A549 (cell line): ENCODE measurements at regions of chr9 and their contacts with region 1.

Region 1: GRCh38 chr9:127916665-127917613 is at the start of gene ST6GALNAC4:
- DNase-seq: peak; percentile 74 to 89
- ATAC-seq: peak; percentile 42 to 74
- H3K4me3 ChIP-seq: peak within 1 kb of the TSS; percentile 65
- H3K27ac ChIP-seq: peak within 1 kb of the TSS; percentile 82 to 90
- H3K4me1 ChIP-seq: peaks cover 72% of the 10 kb centered on the region
- CTCF ChIP-seq: no peak
- EP300 ChIP-seq: no peak
- POLR2A ChIP-seq: peak; percentile 43; the same call in 1 of the 2 replicates
- RAD21 ChIP-seq: no peak
- polyA plus RNA-seq, gene ST6GALNAC4: 11.0 and 12.5 TPM in 2 replicates

Region 2: GRCh38 chr9:127489471-127490115 is 427.3 kb before region 1 on chr9:
- CTCF ChIA-PET with region 1: interaction called, 12 read pairs
- POLR2A ChIA-PET with region 1: no interaction called
- DNase-seq: no peak
- ATAC-seq: peak in 1 of 2 experiments; percentile 60; a peak in 3 of 6 replicates
- H3K4me3 ChIP-seq: no peak overlapping the region
- H3K27ac ChIP-seq: no peak overlapping the region
- H3K4me1 ChIP-seq: no peaks in the 10 kb centered on the region
- CTCF ChIP-seq: no peak
- EP300 ChIP-seq: no peak
- POLR2A ChIP-seq: no peak
- RAD21 ChIP-seq: no peak

Region 3: DNA sequence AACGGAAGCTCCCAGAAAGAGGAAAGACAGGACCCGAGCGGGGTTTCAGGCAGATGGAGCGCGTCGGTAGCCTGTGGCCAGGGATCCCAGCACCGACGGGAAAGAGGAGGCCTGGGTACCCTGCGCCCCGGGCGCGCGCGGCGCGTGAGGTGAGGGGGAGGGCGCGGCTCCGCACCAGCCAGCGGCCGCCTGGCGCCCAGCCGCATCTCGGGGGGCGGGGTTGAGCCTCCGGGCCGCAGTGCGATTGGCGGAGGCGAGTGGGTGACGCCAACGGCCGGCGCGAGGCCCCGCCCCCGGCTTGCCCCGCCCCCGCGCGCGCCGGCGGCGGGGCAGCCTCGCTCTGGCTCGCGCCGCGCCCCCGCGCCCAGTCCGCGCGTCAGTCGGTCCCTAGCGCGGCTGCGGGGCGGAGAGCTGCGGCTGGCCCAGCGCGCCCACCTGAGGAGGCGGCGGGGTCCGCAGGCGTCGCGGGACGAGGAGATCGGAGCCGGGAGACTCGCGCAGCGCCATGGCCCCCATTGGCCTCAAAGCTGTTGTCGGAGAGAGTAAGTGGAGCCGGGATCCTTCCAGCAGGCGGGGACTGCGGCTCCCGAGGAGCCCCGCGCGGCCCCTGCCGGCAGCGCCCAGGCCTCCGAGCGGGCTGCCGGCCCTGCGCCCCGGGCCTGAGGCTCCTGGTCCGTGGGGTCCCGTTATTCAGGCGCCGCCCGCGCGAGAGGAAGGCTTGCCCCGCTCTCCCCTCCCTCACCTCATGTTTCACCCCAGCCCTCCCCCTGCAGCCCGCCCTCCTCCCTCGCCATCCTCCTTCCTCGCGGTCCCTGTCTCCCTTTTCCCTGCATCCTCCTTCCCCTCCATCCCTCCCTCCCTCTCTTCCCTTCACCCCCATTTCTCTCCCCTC is 304.8 kb before region 1 on chr9 and contains the start of gene STXBP1:
- CTCF ChIA-PET with region 1: interaction called, 11 read pairs
- POLR2A ChIA-PET with region 1: no interaction called
- DNase-seq: peak; percentile 81 to 84
- ATAC-seq: peak; percentile 72 to 74
- H3K4me3 ChIP-seq: peak within 1 kb of the TSS; percentile 77
- H3K27ac ChIP-seq: peak within 1 kb of the TSS; percentile 73 to 96
- H3K4me1 ChIP-seq: peaks cover 23% of the 10 kb centered on the region
- CTCF ChIP-seq: 0 out of 3 replicates have a peak, but pooled peaks have one; percentile 10
- EP300 ChIP-seq: no peak
- POLR2A ChIP-seq: peak; percentile 59
- RAD21 ChIP-seq: no peak
- polyA plus RNA-seq, gene STXBP1: 13.3 and 20.4 TPM in 2 replicates

Region 4: DNA sequence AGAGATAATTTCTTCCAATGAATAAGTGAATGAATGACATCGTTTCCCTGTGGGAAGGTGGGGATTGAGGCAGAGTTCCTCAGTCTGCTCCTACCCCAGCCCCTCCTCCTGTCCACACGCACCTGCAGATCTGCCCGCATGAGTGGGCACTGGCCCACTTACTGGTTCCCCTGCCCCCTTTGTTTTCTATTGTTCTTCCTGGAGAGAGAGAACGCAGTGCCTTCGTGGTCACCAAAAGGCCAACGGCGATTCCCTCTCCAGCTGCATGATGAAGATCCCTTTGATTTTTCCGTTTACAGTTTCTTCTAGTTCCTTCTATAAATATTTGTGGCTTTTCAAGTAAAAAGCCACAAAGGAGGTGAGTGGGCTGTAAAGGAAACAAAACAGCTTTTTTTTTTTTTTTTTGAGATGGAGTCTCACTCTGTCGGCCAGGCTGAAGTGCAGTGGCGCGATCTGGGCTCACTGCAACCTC is 120.0 kb before region 1 on chr9:
- CTCF ChIA-PET with region 1: interaction called, 17 read pairs
- POLR2A ChIA-PET with region 1: no interaction called
- DNase-seq: no peak
- ATAC-seq: no peak; a peak in 1 of 6 replicates
- H3K4me3 ChIP-seq: no peak overlapping the region
- H3K27ac ChIP-seq: no peak overlapping the region
- H3K4me1 ChIP-seq: peaks cover 33% of the 10 kb centered on the region
- CTCF ChIP-seq: no peak
- EP300 ChIP-seq: no peak
- POLR2A ChIP-seq: no peak
- RAD21 ChIP-seq: no peak

Region 5: DNA sequence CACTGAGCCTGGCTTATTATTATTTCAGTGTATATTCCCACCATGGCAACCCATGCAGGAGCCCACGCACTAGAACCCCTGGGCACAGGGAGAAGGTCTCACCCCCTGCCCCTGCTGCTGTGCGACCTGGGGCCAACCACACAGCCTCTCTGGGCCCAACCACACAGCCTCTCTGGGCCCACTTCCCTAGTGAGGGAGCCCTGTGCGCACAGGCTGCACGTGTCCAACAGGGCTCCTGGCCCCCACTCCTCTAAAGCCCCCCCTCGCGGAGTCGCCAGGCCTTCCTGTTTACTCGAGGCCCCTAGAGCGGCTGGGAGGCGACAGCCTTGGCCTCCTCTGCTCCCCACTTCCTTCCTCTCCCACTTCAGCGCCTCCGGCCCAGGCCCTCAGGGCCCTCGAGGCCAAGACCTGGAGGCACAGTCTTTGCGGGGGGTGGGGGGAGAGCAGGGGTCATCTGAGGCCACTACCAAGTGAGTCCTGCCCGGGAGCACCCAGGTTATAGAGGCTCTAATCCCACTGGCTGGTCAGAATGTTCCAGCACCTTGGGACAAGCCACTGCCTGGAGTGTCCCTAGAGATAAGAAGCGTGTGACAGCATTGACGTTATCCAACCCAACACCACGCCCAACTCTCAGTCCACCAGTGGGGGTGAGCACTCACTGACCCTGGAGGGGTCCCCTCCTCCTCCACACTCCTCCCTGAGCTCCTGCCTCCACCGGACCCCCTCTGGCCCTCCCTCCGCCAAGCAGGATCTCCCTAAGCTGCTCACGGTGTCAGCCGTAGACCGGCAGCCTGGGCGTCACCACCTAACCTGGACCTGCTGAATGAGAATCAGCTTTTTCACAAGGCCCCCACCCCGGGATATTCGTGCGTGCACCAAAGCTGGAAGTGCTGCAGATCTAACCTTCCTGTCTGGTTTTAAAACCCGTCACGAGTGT is 54.6 kb before region 1 on chr9:
- CTCF ChIA-PET with region 1: interaction called, 10 read pairs
- POLR2A ChIA-PET with region 1: interaction called, 3 read pairs
- DNase-seq: no peak
- ATAC-seq: no peak; a peak in 1 of 6 replicates
- H3K4me3 ChIP-seq: no peak overlapping the region
- H3K27ac ChIP-seq: no peak overlapping the region
- H3K4me1 ChIP-seq: no peaks in the 10 kb centered on the region; the same call in 2 of the 3 replicates
- CTCF ChIP-seq: no peak
- EP300 ChIP-seq: no peak
- POLR2A ChIP-seq: no peak
- RAD21 ChIP-seq: no peak

Region 6: DNA sequence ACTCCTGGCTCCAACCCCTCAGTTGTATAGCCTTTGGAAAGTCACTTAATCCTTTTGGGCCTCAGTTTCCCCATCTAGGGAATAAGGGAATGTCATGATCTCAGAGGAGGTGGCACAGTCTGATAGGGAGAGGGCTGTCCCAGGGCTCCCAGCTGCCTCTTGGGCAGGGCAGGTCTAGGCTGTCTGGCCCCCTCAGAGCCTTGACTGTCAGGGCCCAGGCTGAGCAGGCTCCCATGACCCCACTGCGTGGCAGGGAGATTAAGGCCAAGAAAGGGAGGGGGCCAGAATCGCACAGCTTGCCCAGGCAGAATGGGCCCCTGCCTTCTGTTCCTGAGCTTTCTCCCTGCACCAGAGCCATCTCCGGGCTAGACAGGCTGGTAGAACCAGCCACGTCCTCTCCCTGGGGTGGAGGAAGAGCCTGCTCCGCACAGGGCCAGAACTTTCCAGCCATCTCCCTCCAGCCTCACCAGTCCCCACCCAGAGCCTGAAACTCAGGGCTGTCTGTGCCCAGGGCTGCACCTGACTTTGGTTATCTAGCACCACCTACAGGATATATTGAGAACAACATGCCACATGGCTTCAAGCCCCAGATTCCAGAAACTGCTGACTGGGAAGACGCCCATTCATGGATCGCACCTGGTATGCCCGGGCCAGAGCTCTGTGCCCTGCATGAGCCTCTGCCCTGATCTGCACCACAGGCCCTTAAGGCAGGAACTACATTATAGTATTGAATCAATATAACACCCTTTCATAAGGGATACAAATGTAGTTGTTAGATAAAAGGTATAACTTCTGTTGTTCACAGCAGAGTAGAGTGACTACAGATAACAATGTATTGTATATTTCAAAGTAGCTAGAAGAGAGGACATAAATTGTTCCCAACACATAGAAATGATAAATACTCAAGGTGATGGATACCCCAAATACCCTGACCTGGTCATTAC is 118.2 kb after region 1 on chr9:
- CTCF ChIA-PET with region 1: interaction called, 19 read pairs
- POLR2A ChIA-PET with region 1: no interaction called
- DNase-seq: peak; percentile 89 to 91
- ATAC-seq: peak; percentile 97 to 98
- H3K4me3 ChIP-seq: no peak overlapping the region
- H3K27ac ChIP-seq: peak overlapping the region; percentile 61 to 87
- H3K4me1 ChIP-seq: peaks cover 5% of the 10 kb centered on the region; the same call in 1 of the 3 replicates
- CTCF ChIP-seq: peak; percentile 87
- EP300 ChIP-seq: no peak
- POLR2A ChIP-seq: no peak
- RAD21 ChIP-seq: peak; percentile 97 to 99